Kidney (tissue), 22 donors: ENCODE measurements at regions of chrX and their contacts with region 1.

Region 1: DNA sequence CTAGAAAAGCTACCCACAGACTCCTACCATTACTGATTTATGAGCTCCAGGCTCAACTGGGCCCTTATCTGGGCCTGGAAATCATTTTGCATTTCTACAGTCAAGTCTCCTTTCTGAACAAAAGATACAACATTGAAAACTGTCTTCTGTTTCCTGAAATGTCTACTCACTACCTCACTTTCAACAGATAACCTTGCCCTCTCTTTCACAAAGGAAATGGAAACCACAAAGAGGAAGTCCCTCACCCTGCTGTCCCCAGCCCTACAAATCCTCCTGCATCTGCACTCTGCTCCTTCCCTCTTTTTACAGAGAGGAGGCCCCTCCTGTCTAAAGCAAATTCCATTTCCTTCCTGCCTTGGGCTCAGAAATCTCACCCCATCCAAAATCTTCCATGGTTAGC is 24.8 kb upstream of the CYBB start:
- DNase-seq: no peak
- H3K4me3 ChIP-seq: no peak overlapping the region
- H3K27ac ChIP-seq: no peak overlapping the region
- H3K4me1 ChIP-seq: no peaks in the 10 kb centered on the region
- H3K27me3 ChIP-seq: no peaks in the 10 kb centered on the region
- CTCF ChIP-seq: no peak

Region 2: DNA sequence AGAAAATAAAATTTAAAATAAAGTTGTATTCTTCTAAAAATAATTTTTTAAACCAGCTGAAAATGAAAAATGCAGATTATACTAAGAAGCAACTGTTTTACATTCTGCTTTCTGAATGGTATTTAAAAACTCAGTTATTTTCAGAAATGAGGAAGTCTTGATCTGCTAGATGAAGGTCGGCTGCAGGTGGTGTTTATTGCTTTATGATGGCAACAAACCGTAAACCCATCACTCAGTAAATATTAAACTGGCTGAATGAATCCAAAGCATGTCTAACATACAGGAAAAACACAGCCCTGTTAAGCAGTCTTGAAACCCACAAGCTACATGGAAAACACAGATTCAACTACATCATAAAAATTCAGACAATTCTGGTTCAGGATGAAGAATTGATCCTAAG is 63.0 kb after region 1 on chrX:
- intact Hi-C with region 1: loop called (anchors 10 kb)
- DNase-seq: no peak
- H3K4me3 ChIP-seq: no peak overlapping the region
- H3K27ac ChIP-seq: no peak overlapping the region
- H3K4me1 ChIP-seq: no peaks in the 10 kb centered on the region
- H3K27me3 ChIP-seq: peaks cover 7% of the 10 kb centered on the region
- CTCF ChIP-seq: no peak